Activated naive CD4-positive, alpha-beta T cell treated with anti-CD3 and anti-CD28 coated beads for 36 hours (primary cell): ENCODE measurements at regions of chr1 and their contacts with region 1.

Region 1: DNA sequence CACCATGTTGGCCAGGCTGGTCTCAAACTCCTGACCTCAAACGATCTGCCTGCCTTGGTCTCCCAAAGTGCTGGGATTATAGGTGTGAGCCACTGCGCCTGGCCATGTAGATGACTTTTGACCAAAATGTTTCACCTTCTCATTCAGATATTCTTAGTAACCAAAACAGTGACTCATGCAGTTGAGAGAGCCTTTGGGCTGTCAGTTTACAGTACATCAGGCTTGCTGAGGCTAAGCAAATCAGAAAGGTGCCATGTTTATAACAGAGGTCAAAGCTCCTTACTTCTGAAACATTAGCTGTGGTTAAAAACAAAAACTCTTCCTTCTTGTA is 21.0 kb downstream of the CNIH4 start:
- DNase-seq: peak; percentile 66
- H3K4me3 Mint-ChIP-seq: no peak overlapping the region
- H3K27ac Mint-ChIP-seq: peak overlapping the region; percentile 67
- H3K4me1 Mint-ChIP-seq: peaks cover 91% of the 10 kb centered on the region
- H3K27me3 Mint-ChIP-seq: no peaks in the 10 kb centered on the region

Region 2: GRCh38 chr1:223639331-223639749 is 738.3 kb before region 1 on chr1:
- CTCF ChIA-PET with region 1: no interaction called
- intact Hi-C with region 1: no loop called
- DNase-seq: no peak
- H3K4me3 Mint-ChIP-seq: no peak overlapping the region
- H3K27ac Mint-ChIP-seq: no peak overlapping the region
- H3K4me1 Mint-ChIP-seq: peaks cover 6% of the 10 kb centered on the region
- H3K27me3 Mint-ChIP-seq: no peaks in the 10 kb centered on the region

Region 3: GRCh38 chr1:223831755-223832636 is 545.6 kb before region 1 on chr1:
- CTCF ChIA-PET with region 1: no interaction called
- intact Hi-C with region 1: loop called (anchors 1 kb)
- DNase-seq: peak; percentile 14
- H3K4me3 Mint-ChIP-seq: peak overlapping the region; percentile 28
- H3K27ac Mint-ChIP-seq: peak overlapping the region; percentile 93
- H3K4me1 Mint-ChIP-seq: peaks cover 28% of the 10 kb centered on the region
- H3K27me3 Mint-ChIP-seq: no peaks in the 10 kb centered on the region

Region 4: GRCh38 chr1:224329842-224330753 is 47.5 kb before region 1 on chr1 and contains the start of gene NVL:
- CTCF ChIA-PET with region 1: no interaction called
- intact Hi-C with region 1: loop called (anchors 2 kb)
- DNase-seq: peak; percentile 89
- H3K4me3 Mint-ChIP-seq: peak within 1 kb of the TSS; percentile 98
- H3K27ac Mint-ChIP-seq: peak within 1 kb of the TSS; percentile 98
- H3K4me1 Mint-ChIP-seq: peaks cover 38% of the 10 kb centered on the region
- H3K27me3 Mint-ChIP-seq: no peaks in the 10 kb centered on the region
- total RNA-seq, gene NVL: 26.7 to 29.9 TPM

Region 5: DNA sequence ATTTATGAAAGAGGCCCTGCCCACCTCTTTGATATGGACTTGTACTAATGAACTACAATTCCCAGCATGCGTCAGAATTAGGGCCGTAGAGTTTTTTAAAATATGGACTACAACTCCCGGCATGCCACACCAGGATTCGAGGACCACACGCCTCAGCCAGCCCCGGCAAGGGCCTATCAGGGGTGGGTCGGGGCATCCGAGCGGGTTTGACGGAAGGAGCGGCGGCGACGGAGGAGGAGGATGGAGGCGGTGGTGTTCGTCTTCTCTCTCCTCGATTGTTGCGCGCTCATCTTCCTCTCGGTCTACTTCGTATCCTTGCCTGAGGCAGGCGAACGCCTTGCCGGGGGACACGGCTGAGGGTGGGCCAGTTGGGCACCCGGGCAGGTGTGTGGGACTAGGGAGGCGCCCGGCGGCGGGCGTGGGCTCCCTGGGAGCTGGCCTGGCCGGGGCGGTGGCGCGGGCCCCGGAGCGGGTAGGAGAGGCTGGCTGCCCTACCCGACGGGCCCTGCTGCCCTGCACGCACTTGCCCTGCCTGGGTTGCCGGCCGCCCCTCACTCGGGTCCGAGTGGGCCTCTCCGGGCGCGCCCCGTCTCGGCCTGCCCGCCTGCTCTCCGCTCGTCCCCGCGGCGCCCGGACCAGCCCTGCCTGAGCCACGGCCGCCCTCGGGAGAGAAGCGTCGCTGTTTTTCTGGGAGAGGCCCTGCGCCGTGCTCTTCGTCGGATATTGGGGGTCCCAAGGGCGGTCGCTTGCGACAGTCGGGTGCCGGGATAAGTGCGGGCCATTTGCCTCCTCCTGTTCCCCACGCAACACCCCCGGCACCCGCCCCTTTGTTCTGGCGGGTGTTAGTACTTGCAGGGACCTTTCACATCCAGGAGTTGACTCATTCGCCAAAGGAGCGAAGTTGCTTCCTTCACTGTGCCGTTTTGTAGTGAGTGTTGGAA is 20.7 kb before region 1 on chr1 and contains the start of gene CNIH4:
- CTCF ChIA-PET with region 1: no interaction called
- intact Hi-C with region 1: loop called (anchors 1 kb)
- DNase-seq: peak; percentile 94
- H3K4me3 Mint-ChIP-seq: peak within 1 kb of the TSS; percentile 89
- H3K27ac Mint-ChIP-seq: peak within 1 kb of the TSS; percentile 86
- H3K4me1 Mint-ChIP-seq: peaks cover 31% of the 10 kb centered on the region
- H3K27me3 Mint-ChIP-seq: no peaks in the 10 kb centered on the region
- total RNA-seq, gene CNIH4: 34.7 to 35.1 TPM

Region 6: DNA sequence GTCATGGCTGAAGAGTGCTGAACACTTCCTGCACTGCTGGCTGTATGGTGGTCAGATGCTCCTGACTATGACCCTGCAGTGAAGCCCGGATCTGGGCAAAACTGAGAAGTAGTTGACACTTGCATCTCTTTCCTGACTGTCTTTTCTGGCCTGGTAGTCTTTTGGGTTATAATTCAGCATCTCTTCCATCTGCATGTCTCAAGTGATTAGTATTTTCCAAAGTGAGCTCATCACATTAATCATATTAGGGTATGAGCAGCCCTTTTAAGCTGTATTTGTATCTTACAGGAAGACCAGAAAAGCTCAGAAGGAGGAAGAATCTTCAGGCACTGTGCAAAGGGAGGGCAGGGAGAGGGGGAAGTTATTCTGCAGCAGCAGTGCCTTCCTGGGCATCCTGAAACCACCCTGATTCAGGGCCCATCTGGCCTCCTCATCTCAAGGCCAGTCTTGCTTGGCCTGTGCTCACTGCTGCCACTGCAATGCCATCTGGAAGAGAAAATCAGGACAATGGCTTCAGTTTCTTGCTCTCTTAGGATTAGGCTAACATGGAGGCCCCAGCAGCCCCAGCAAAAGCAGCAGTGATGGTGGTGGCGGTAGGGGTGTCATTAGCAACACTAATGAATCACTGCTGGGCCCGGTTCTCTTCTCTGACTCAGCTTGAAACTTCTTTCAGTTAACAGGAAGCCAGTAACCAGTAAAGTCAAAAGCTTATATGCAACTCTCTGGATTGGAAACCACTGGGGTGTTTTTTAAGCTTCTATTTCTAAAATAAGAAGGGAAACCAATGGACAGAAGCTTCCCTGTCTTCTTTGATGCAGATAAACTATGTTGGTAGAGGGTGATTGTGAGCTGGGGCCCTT is 120.3 kb after region 1 on chr1:
- CTCF ChIA-PET with region 1: no interaction called
- intact Hi-C with region 1: loop called (anchors 1 kb)
- DNase-seq: peak; percentile 91
- H3K4me3 Mint-ChIP-seq: peak overlapping the region; percentile 54
- H3K27ac Mint-ChIP-seq: peak overlapping the region; percentile 92
- H3K4me1 Mint-ChIP-seq: peaks cover 40% of the 10 kb centered on the region
- H3K27me3 Mint-ChIP-seq: peaks cover 7% of the 10 kb centered on the region